Motor neuron (in vitro differentiated cells): ENCODE measurements at regions of chr19 and their contacts with region 1.

Region 1: DNA sequence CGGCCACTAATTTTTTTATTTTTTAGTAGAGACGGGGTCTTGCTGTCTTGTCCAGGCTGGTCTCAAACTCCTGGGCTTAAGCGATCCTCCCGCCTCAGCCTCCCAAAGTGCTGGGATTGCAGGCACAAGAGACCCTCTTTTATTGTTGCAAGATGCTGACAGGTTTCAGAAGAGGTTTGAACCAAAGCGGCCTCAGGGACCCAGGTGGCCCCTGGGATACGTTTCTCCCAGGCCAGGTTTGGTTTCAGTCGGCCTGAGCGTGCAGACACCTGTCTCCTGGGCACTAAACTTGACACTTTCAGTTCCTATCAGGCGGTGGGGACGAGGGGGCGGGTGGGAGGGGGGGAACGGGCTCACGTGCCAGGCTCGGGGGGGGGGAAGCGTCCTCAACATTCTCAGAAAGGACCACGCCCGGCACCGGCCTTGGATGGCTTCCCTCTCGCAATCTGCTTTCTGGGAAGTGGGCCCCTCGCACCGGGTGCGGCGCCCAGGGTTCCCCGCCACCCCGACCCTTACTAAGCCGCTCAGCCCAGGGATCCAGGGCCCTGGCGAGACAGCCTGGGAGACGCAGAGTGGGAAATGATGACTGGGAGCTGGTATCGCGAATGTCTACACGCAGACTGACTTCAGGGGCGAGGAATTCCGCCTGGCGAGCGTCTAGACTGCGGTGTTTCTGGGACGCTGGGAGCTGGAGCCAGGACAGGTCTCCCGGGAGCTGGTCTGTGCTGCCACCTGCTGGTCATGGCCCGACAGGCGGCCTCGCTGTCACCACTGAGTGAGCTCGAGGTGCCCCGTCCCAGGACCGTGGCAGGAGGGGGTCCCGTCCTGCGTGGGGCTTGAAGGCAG is 91.6 kb downstream of the GNG7 start:
- ATAC-seq: peak; percentile 88 to 98 (median 96)
- H3K4me3 ChIP-seq: peak overlapping the region; percentile 11 to 33 (median 21)
- H3K27ac ChIP-seq: no peak overlapping the region
- H3K4me1 ChIP-seq: peaks cover 0 to 2% of the 10 kb centered on the region in 2 donors

Region 2: GRCh38 chr19:1734321-1734966 is 876.4 kb before region 1 on chr19:
- in situ Hi-C with region 1: no loop called
- ATAC-seq: peak in 1 of 8 experiments; percentile 21
- H3K4me3 ChIP-seq: no peak overlapping the region
- H3K27ac ChIP-seq: no peak overlapping the region
- H3K4me1 ChIP-seq: peaks cover 0 to 2% of the 10 kb centered on the region in 2 donors

Region 3: GRCh38 chr19:2461751-2462634 is 148.9 kb before region 1 on chr19:
- in situ Hi-C with region 1: loop called in 1 of 9 experiments (anchors 10 kb)
- ATAC-seq: peak in 7 of 8 experiments; percentile 7 to 74 (median 24)
- H3K4me3 ChIP-seq: peak overlapping the region; percentile 15 to 29 (median 21)
- H3K27ac ChIP-seq: no peak overlapping the region
- H3K4me1 ChIP-seq: no peaks in the 10 kb centered on the region

Region 4: DNA sequence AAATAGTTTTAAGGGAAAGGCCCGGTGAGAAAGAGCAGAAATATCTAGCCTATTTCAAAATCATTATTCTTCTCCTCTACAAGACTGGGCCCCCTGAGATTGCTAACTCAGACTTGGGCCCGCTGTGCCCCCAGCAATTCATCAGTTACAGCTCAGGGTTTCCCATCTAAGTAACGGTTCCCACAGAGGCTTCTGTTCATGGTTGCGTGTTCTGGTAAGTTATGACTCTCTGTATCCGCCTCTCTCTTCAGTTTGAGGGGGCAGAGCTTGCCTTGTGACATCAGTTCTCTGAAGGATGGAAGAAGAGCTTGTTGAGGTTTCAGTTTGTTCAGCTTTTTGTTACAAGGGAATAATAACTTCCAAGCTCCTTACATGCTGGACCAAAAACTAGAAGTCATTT is 301.4 kb after region 1 on chr19:
- in situ Hi-C with region 1: no loop called
- ATAC-seq: no peak
- H3K4me3 ChIP-seq: no peak overlapping the region
- H3K27ac ChIP-seq: no peak overlapping the region
- H3K4me1 ChIP-seq: no peaks in the 10 kb centered on the region